CD4-positive, alpha-beta T cell (primary cell): ENCODE measurements at regions of chr15 and their contacts with region 1.

Region 1: DNA sequence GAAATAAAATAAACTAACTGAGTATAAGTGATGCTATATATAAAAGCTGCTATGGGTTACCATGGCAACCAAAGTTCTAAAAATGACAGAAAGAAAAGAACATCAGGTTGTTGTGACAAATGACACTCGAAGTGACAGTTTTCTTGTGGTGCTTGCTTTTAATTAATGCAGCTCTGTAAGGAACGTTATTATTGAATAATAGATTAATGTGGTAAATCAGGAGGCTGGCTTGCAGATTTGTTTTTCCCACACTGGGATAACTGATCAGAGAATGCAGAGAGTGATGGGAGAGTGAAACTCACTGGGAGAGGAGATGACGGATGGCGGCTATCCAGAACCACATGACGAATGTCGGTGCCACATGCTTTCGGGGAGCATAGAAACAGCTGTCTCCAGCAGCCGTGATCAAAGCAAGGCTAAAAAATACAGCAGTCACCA is 207.0 kb upstream of the ATP10A start:
- DNase-seq: no peak
- ATAC-seq: no peak
- H3K4me3 ChIP-seq: no peak overlapping the region
- H3K4me3 Mint-ChIP-seq: no peak overlapping the region
- H3K27ac ChIP-seq: no peak overlapping the region
- H3K27ac Mint-ChIP-seq: no peak overlapping the region
- H3K4me1 ChIP-seq: no peaks in the 10 kb centered on the region
- H3K4me1 Mint-ChIP-seq: no peaks in the 10 kb centered on the region
- H3K27me3 ChIP-seq: peaks cover 0 to 4% of the 10 kb centered on the region in 2 experiments
- H3K27me3 Mint-ChIP-seq: peaks cover 43% of the 10 kb centered on the region
- CTCF ChIP-seq: no peak

Region 2: DNA sequence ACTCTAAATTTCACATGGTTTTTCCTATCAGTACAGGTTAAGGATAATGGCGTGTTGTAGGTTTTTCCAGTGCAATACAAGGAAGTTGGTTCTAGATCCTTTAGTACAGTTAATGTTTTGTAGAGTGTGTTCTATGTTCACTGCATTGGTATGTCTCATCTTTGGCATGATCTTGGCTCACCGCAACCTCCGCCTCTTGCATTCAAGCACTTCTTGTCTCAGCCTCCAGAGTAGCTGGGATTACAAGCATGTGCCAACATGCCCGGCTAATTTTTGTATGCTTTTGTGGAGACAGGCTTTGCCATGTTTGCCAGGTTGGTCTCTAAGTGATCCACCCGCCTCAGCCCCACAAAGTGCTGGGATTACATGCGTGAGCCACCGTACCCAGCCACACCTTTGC is 1084.9 kb before region 1 on chr15:
- CTCF ChIA-PET with region 1: no interaction called
- POLR2A ChIA-PET with region 1: no interaction called
- intact Hi-C with region 1: no loop called
- DNase-seq: no peak
- ATAC-seq: no peak
- H3K4me3 ChIP-seq: no peak overlapping the region
- H3K4me3 Mint-ChIP-seq: no peak overlapping the region
- H3K27ac ChIP-seq: no peak overlapping the region
- H3K27ac Mint-ChIP-seq: no peak overlapping the region
- H3K4me1 ChIP-seq: no peaks in the 10 kb centered on the region
- H3K4me1 Mint-ChIP-seq: no peaks in the 10 kb centered on the region
- H3K27me3 ChIP-seq: no peaks in the 10 kb centered on the region
- H3K27me3 Mint-ChIP-seq: no peaks in the 10 kb centered on the region
- CTCF ChIP-seq: no peak

Region 3: DNA sequence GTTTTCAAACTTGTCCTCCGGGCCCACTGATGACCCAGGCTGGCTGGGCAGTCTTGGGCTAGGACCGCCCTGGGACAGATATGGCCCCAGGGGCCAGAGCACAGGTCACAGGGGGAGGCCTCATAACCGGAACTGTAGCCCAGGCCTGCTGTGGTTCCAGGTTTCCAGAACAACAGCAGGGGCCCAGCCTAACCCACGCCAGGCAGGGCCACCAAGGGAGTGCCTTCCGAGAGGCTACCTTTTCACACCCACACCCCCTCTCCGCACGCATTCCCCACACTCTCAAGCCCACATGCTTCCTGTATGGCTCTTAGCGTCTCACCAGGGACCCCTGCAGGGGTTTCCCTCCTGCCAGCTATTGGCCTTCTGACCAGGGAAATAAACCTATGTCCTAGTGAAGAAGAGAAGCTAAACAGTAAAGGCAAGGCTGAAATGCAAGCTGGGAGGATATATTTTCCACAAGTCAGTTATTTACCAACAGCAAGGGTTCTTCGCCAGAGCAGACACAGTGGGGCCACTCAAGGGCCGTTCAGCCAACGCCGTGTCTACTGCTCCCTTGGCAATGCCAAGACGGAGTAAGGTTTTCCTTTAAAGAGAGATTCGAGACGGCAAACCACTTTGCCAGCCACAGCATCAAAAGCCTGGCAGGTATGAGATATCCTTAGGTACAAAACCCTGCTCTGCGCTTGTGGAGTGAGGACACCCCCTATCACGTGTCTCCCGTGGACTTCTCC is 342.1 kb before region 1 on chr15:
- CTCF ChIA-PET with region 1: no interaction called
- POLR2A ChIA-PET with region 1: no interaction called
- intact Hi-C with region 1: loop called in 1 of 2 experiments (anchors 10 kb)
- DNase-seq: no peak
- ATAC-seq: no peak
- H3K4me3 ChIP-seq: no peak overlapping the region
- H3K4me3 Mint-ChIP-seq: no peak overlapping the region
- H3K27ac ChIP-seq: no peak overlapping the region
- H3K27ac Mint-ChIP-seq: no peak overlapping the region
- H3K4me1 ChIP-seq: no peaks in the 10 kb centered on the region
- H3K4me1 Mint-ChIP-seq: no peaks in the 10 kb centered on the region
- H3K27me3 ChIP-seq: no peaks in the 10 kb centered on the region
- H3K27me3 Mint-ChIP-seq: no peaks in the 10 kb centered on the region
- CTCF ChIP-seq: no peak

Region 4: GRCh38 chr15:26082221-26083109 is 12.4 kb after region 1 on chr15:
- CTCF ChIA-PET with region 1: no interaction called
- POLR2A ChIA-PET with region 1: interaction called, 4 read pairs
- intact Hi-C with region 1: loop called in 1 of 2 experiments (anchors 2 kb)
- DNase-seq: peak; percentile 89 to 98 (median 95)
- ATAC-seq: peak; percentile 95
- H3K4me3 ChIP-seq: peak overlapping the region; percentile 67
- H3K4me3 Mint-ChIP-seq: peak overlapping the region; percentile 89
- H3K27ac ChIP-seq: peak overlapping the region; percentile 56 to 57
- H3K27ac Mint-ChIP-seq: peak overlapping the region; percentile 98
- H3K4me1 ChIP-seq: peaks cover 16% of the 10 kb centered on the region
- H3K4me1 Mint-ChIP-seq: peaks cover 57% of the 10 kb centered on the region
- H3K27me3 ChIP-seq: no peaks in the 10 kb centered on the region
- H3K27me3 Mint-ChIP-seq: peaks cover 14% of the 10 kb centered on the region
- CTCF ChIP-seq: no peak

Region 5: GRCh38 chr15:26103002-26103404 is 32.9 kb after region 1 on chr15:
- CTCF ChIA-PET with region 1: no interaction called
- POLR2A ChIA-PET with region 1: no interaction called
- intact Hi-C with region 1: loop called in 1 of 2 experiments (anchors 5 kb)
- DNase-seq: no peak
- ATAC-seq: no peak
- H3K4me3 ChIP-seq: no peak overlapping the region
- H3K4me3 Mint-ChIP-seq: no peak overlapping the region
- H3K27ac ChIP-seq: no peak overlapping the region
- H3K27ac Mint-ChIP-seq: no peak overlapping the region
- H3K4me1 ChIP-seq: no peaks in the 10 kb centered on the region
- H3K4me1 Mint-ChIP-seq: no peaks in the 10 kb centered on the region
- H3K27me3 ChIP-seq: peaks cover 0 to 4% of the 10 kb centered on the region in 2 experiments
- H3K27me3 Mint-ChIP-seq: peaks cover 14% of the 10 kb centered on the region
- CTCF ChIP-seq: no peak